Caco-2 (cell line): ENCODE measurements at regions of chr1 and their contacts with region 1.

Region 1: GRCh38 chr1:153977250-153978240 is at the start of gene JTB:
- DNase-seq: peak; percentile 86
- H3K4me3 ChIP-seq: peak within 1 kb of the TSS; percentile 84
- H3K4me3 Mint-ChIP-seq: peak within 1 kb of the TSS; percentile 95
- H3K27ac Mint-ChIP-seq: peak within 1 kb of the TSS; percentile 92
- H3K4me1 ChIP-seq: peaks cover 8% of the 10 kb centered on the region
- H3K4me1 Mint-ChIP-seq: peaks cover 6% of the 10 kb centered on the region
- H3K27me3 ChIP-seq: no peaks in the 10 kb centered on the region
- H3K27me3 Mint-ChIP-seq: no peaks in the 10 kb centered on the region
- CTCF ChIP-seq: no peak
- total RNA-seq, gene JTB: 123 and 124 TPM in 2 replicates

Region 2: GRCh38 chr1:153958111-153958960 is 19.2 kb before region 1 on chr1 and contains the start of gene CRTC2:
- CTCF ChIA-PET with region 1: interaction called, 6 read pairs
- POLR2A ChIA-PET with region 1: interaction called, 105 read pairs
- intact Hi-C with region 1: no loop called
- DNase-seq: peak; percentile 98
- H3K4me3 ChIP-seq: peak within 1 kb of the TSS; percentile 98
- H3K4me3 Mint-ChIP-seq: peak within 1 kb of the TSS; percentile 88
- H3K27ac Mint-ChIP-seq: peak within 1 kb of the TSS; percentile 78
- H3K4me1 ChIP-seq: peaks cover 25% of the 10 kb centered on the region
- H3K4me1 Mint-ChIP-seq: peaks cover 33% of the 10 kb centered on the region
- H3K27me3 ChIP-seq: no peaks in the 10 kb centered on the region
- H3K27me3 Mint-ChIP-seq: no peaks in the 10 kb centered on the region
- CTCF ChIP-seq: peak in 1 of 2 experiments; percentile 23
- total RNA-seq, gene CRTC2: 24.4 and 30.8 TPM in 2 replicates

Region 3: DNA sequence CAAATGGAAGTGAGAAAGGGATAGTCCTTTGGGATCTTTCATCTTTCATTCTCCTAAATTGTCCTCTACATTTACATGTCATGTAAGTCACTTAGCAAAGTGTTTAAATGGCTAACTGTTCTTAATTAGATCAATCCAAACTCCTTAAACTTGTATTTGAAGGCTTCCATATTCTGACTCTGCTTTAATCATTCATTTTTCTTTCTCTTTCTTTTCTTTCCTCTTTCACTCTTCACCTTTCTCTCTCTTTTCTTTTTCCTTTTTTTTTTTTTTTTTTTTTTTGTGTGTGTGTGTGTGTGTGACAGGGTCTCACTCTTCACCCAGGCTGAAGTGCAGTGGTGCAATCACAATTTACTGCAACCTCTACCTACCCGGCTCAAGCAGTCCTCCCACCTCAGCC is 84.8 kb after region 1 on chr1:
- CTCF ChIA-PET with region 1: no interaction called
- POLR2A ChIA-PET with region 1: no interaction called
- intact Hi-C with region 1: no loop called
- DNase-seq: no peak
- H3K4me3 ChIP-seq: no peak overlapping the region
- H3K4me3 Mint-ChIP-seq: no peak overlapping the region
- H3K27ac Mint-ChIP-seq: no peak overlapping the region
- H3K4me1 ChIP-seq: no peaks in the 10 kb centered on the region
- H3K4me1 Mint-ChIP-seq: peaks cover 8% of the 10 kb centered on the region
- H3K27me3 ChIP-seq: no peaks in the 10 kb centered on the region
- H3K27me3 Mint-ChIP-seq: no peaks in the 10 kb centered on the region
- CTCF ChIP-seq: no peak